Tibial artery (tissue), 4 donors: ENCODE measurements at regions of chrX and their contacts with region 1.

Region 1: DNA sequence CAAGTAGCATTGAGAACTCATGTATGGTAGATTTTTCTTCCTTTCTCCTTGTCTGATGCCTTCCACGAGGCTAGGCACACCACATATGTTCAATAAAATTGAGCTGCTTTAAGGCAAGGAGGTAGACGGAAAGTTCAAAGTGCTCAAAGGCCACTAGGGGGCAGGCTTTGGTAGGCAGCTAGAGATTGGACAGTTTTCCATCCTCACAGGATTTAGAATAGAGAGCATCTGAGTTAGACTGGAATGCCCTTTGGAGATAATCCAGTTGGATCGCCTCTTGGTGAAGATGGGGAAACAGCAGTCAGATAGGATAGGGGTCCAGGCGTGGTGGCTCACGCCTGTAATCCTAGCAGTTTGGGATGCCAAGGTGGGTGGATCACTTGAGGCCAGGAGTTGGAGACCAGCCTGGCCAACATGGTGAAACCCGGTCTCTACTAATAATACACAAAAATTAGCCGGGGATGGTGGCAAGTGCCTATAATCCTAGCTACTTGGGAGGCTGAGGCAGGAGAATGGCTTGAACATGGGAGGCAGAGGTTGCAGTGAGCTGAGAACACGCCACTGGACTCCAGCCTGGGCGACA is 30.4 kb downstream of the ELF4 start:
- DNase-seq: peak; percentile 59 to 67
- H3K4me3 ChIP-seq: no peak overlapping the region
- H3K27ac ChIP-seq: no peak overlapping the region
- H3K4me1 ChIP-seq: peaks cover 0 to 24% (median 2%) of the 10 kb centered on the region in 4 donors
- H3K27me3 ChIP-seq: no peaks in the 10 kb centered on the region
- CTCF ChIP-seq: peak; percentile 55 to 66

Region 2: DNA sequence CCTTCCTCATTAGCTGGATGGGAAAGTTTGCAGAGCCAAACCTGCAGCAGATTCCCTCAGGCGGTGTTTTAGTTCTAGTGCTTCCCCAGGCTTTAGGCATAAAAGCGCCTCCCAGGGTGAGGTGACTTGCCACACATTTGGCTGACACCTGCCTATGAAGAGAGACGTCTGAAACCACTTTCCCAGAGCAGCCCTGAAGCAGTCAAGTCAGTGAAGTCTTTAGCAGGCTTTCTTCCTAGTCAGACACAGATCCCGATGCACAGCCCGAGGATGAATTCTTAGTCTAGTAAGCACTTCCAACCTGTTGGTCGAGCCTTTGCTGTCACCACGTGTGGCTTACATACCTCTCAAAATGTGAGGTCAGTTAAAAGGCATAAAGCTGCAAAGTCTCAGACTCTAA is 1040.7 kb before region 1 on chrX:
- intact Hi-C with region 1: no loop called
- DNase-seq: no peak
- H3K4me3 ChIP-seq: no peak overlapping the region
- H3K27ac ChIP-seq: no peak overlapping the region
- H3K4me1 ChIP-seq: no peaks in the 10 kb centered on the region
- H3K27me3 ChIP-seq: no peaks in the 10 kb centered on the region
- CTCF ChIP-seq: no peak

Region 3: DNA sequence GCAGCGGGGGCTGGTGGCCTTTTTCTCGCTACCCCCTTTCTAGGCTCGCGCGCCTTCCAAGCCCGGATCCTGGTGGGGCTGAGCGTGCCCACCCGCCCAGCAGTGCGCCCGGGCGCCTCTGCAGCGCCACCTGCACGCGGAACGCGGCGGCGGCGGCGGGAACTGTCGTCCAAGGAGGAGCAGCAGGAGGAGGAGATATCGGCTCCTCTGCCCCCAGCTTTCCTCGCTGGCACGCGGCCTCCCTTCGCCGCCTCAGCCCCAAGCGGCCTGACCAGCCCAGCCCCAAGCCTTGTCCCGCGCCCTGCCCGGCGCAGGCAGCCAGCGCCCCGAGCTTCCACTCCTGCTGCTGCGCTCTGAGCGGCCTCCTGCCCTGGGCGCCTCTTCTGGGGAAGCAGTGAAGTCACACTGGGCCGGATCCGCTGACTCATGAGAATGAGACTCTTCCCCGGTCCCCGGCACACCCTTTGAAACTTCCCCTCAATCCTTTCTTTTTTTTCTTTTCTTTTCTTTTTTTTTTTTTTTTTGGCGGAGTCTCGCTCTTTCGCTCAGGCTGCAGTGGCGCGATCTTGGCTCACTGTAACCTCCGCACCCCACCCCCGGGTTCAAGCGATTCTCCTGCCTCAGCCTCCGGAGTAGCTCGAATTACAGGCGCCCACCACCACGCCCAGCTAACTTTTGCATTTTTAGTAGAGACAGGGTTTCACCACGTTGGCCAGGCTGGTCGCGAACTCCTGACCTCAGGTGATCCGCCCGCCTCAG is 41.0 kb after region 1 on chrX:
- intact Hi-C with region 1: loop called (anchors 5 kb)
- DNase-seq: peak; percentile 83 to 88
- H3K4me3 ChIP-seq: peak overlapping the region; percentile 42 to 54
- H3K27ac ChIP-seq: peak overlapping the region; percentile 75 to 77
- H3K4me1 ChIP-seq: peaks cover 0 to 39% (median 14%) of the 10 kb centered on the region in 4 donors
- H3K27me3 ChIP-seq: no peaks in the 10 kb centered on the region
- CTCF ChIP-seq: peak; percentile 66 to 71

Region 4: GRCh38 chrX:130190801-130191200 is 110.9 kb after region 1 on chrX:
- intact Hi-C with region 1: loop called (anchors 5 kb)
- DNase-seq: no peak
- H3K4me3 ChIP-seq: no peak overlapping the region
- H3K27ac ChIP-seq: no peak overlapping the region
- H3K4me1 ChIP-seq: no peaks in the 10 kb centered on the region
- H3K27me3 ChIP-seq: no peaks in the 10 kb centered on the region
- CTCF ChIP-seq: no peak